ENCODE measurements at regions of chr15 and their contacts with region 1.

Region 1: DNA sequence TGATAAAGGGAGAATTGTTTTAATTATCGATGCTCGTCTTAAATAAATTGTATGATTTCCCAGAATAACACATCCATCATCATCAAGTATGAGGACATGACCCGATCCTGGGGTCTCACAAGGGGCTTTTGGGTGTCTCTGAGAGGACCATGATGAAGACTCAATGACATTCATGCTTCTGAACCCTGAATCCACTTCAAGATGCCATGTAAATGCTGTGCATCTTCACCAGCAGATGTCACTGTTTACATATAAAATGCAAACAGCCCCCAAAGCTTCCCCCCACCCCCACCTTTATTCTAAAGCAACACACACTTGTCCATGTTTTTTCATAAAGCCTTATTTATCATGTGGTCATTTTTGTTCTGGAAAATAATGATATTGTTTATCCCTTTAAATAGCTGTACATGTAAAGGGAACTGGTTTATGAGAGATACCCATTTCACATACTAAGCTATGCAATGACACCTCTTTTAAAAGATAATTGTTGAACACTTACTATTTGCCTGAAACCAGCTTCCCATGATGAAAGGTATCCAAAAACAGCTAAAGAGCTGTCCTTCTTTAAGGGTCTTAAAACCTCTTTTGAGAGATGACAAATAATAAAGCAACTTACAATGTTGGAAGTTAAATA is 69.7 kb upstream of the UBE3A start:
- DNase-seq: peak in 1 of 2 experiments; percentile 25
- H3K4me3 ChIP-seq: no peak overlapping the region
- H3K4me3 Mint-ChIP-seq: no peak overlapping the region
- H3K27ac Mint-ChIP-seq: no peak overlapping the region
- H3K4me1 ChIP-seq: no peaks in the 10 kb centered on the region
- H3K4me1 Mint-ChIP-seq: no peaks in the 10 kb centered on the region
- H3K27me3 ChIP-seq: no peaks in the 10 kb centered on the region
- H3K27me3 Mint-ChIP-seq: peaks cover 5% of the 10 kb centered on the region
- CTCF ChIP-seq: peak; percentile 67 to 68

Region 2: DNA sequence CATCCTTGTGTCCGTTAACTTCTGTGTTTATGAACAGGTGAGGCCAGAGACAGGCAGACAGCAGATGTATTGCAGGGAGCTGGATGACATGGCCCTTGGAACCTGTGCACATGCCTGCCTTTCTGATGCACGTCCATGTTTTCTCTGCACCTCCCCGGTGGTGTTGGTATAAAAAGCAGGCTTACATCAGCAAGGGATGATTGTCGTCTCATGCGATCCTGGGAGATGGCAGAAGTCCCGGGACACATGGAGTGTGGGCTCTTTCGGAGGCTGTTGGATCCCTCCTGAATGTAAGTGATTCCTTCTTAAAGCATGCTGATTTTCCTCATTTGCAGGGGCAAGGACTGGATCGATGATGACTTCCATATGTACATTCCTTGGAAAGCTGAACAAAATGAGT is 418.9 kb before region 1 on chr15:
- CTCF ChIA-PET with region 1: no interaction called
- POLR2A ChIA-PET with region 1: no interaction called
- intact Hi-C with region 1: no loop called
- DNase-seq: no peak
- H3K4me3 ChIP-seq: no peak overlapping the region
- H3K4me3 Mint-ChIP-seq: no peak overlapping the region
- H3K27ac Mint-ChIP-seq: no peak overlapping the region
- H3K4me1 ChIP-seq: no peaks in the 10 kb centered on the region
- H3K4me1 Mint-ChIP-seq: no peaks in the 10 kb centered on the region
- H3K27me3 ChIP-seq: no peaks in the 10 kb centered on the region
- H3K27me3 Mint-ChIP-seq: no peaks in the 10 kb centered on the region
- CTCF ChIP-seq: no peak

Region 3: DNA sequence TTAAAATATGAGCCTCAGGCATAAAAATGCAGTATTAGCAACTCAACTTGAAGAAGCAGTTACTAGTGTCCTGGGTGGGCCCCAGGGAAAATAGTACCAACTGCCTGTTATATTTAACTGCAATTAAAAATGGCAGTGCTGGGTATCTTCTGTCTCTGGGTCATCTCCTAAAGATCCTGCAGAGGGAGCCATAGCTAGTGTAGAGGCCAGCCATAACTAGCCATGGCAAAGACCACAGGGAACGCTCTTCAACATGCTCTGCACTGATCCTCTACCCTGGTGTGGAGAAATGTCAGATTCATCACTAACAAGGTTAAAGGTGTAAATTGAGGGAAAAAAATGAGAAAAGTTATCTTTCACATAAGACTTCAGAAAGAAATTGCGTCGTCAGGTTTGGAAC is 372.4 kb before region 1 on chr15:
- CTCF ChIA-PET with region 1: no interaction called
- POLR2A ChIA-PET with region 1: no interaction called
- intact Hi-C with region 1: loop called (anchors 10 kb)
- DNase-seq: no peak
- H3K4me3 ChIP-seq: no peak overlapping the region
- H3K4me3 Mint-ChIP-seq: no peak overlapping the region
- H3K27ac Mint-ChIP-seq: no peak overlapping the region
- H3K4me1 ChIP-seq: peaks cover 5% of the 10 kb centered on the region; the same call in 1 of the 2 replicates
- H3K4me1 Mint-ChIP-seq: peaks cover 11% of the 10 kb centered on the region
- H3K27me3 ChIP-seq: no peaks in the 10 kb centered on the region
- H3K27me3 Mint-ChIP-seq: no peaks in the 10 kb centered on the region
- CTCF ChIP-seq: peak in 1 of 2 experiments; percentile 10

Region 4: DNA sequence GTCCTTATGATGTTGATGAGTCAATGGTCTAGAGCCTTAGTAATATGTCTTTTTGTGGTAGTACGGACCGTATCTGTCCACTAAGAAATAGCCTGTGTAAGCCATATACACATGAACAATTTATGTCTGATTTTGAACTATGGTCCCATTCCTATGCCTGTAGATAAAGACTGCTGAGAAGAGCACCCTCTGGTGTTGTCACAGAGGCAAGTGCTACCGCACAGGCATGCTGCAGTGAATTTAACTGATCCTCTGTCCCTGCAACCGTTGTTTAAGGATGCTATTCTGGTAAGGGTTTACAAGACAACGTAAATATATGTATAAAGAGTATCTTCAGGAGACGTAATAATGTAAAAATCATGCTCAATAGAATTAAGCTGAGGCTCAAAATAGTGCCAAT is 240.3 kb before region 1 on chr15:
- CTCF ChIA-PET with region 1: no interaction called
- POLR2A ChIA-PET with region 1: no interaction called
- intact Hi-C with region 1: no loop called
- DNase-seq: no peak
- H3K4me3 ChIP-seq: no peak overlapping the region
- H3K4me3 Mint-ChIP-seq: no peak overlapping the region
- H3K27ac Mint-ChIP-seq: no peak overlapping the region
- H3K4me1 ChIP-seq: no peaks in the 10 kb centered on the region; the same call in 1 of the 2 replicates
- H3K4me1 Mint-ChIP-seq: no peaks in the 10 kb centered on the region
- H3K27me3 ChIP-seq: no peaks in the 10 kb centered on the region
- H3K27me3 Mint-ChIP-seq: no peaks in the 10 kb centered on the region
- CTCF ChIP-seq: no peak

Region 5: GRCh38 chr15:25655207-25655948 is 146.9 kb after region 1 on chr15:
- CTCF ChIA-PET with region 1: no interaction called
- POLR2A ChIA-PET with region 1: no interaction called
- intact Hi-C with region 1: no loop called
- DNase-seq: no peak
- H3K4me3 ChIP-seq: no peak overlapping the region
- H3K4me3 Mint-ChIP-seq: no peak overlapping the region
- H3K27ac Mint-ChIP-seq: no peak overlapping the region
- H3K4me1 ChIP-seq: peaks cover 10% of the 10 kb centered on the region
- H3K4me1 Mint-ChIP-seq: peaks cover 9% of the 10 kb centered on the region
- H3K27me3 ChIP-seq: no peaks in the 10 kb centered on the region
- H3K27me3 Mint-ChIP-seq: no peaks in the 10 kb centered on the region
- CTCF ChIP-seq: no peak

Region 6: DNA sequence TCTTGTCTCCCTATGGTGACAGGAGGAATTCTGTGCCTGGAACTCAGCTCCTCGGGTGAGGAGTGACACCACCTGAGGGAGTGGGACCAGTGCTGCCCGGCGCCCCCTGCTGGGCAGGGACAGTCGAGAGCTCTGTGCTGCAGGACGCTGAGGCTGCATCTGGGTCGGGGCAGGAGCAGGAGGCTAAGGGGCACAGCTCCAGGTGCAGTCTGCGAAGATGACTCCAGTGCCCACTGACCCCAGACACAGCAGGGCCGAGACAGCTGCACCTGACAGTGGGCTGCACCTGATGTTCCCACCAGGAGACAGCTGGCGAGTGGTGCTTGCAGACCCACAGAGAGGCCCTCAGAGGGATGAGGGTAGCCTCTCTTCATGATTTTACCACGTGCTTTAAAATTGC is 201.7 kb after region 1 on chr15:
- CTCF ChIA-PET with region 1: interaction called, 39 read pairs
- POLR2A ChIA-PET with region 1: no interaction called
- intact Hi-C with region 1: loop called (anchors 1 kb)
- DNase-seq: peak; percentile 64 to 78
- H3K4me3 ChIP-seq: no peak overlapping the region
- H3K4me3 Mint-ChIP-seq: no peak overlapping the region
- H3K27ac Mint-ChIP-seq: no peak overlapping the region
- H3K4me1 ChIP-seq: no peaks in the 10 kb centered on the region
- H3K4me1 Mint-ChIP-seq: no peaks in the 10 kb centered on the region
- H3K27me3 ChIP-seq: no peaks in the 10 kb centered on the region
- H3K27me3 Mint-ChIP-seq: no peaks in the 10 kb centered on the region
- CTCF ChIP-seq: peak; percentile 85 to 90